Colonic mucosa (tissue), 4 donors: ENCODE measurements at regions of chr12 and their contacts with region 1.

Region 1: GRCh38 chr12:66301944-66302826 is at the start of gene HELB:
- DNase-seq: peak; percentile 100
- H3K4me3 ChIP-seq: peak within 1 kb of the TSS; percentile 74
- H3K27ac ChIP-seq: peak within 1 kb of the TSS; percentile 95
- H3K4me1 ChIP-seq: no peaks in the 10 kb centered on the region
- H3K27me3 ChIP-seq: no peaks in the 10 kb centered on the region
- CTCF ChIP-seq: no peak
- total RNA-seq, gene HELB: 4.5 to 5.2 TPM

Region 2: GRCh38 chr12:66169221-66170170 is 132.7 kb before region 1 on chr12 and contains the start of gene TMBIM4:
- intact Hi-C with region 1: loop called (anchors 5 kb)
- DNase-seq: peak; percentile 91
- H3K4me3 ChIP-seq: peak within 1 kb of the TSS; percentile 86
- H3K27ac ChIP-seq: peak within 1 kb of the TSS; percentile 100
- H3K4me1 ChIP-seq: no peaks in the 10 kb centered on the region
- H3K27me3 ChIP-seq: no peaks in the 10 kb centered on the region
- CTCF ChIP-seq: peak; percentile 50
- total RNA-seq, gene TMBIM4: 130 to 168 TPM